A549 (cell line): ENCODE measurements at regions of chr5 and their contacts with region 1.

Region 1: GRCh38 chr5:132820162-132820754 is 7.2 kb downstream of the SOWAHA start:
- DNase-seq: peak; percentile 90
- ATAC-seq: peak; percentile 84 to 96
- H3K4me3 ChIP-seq: no peak overlapping the region
- H3K27ac ChIP-seq: peak overlapping the region in 1 of 2 experiments; percentile 49; a peak in 1 of 6 replicates
- H3K4me1 ChIP-seq: 0 out of 3 replicates have a peak, but pooled peaks cover 3% of the 10 kb centered on the region
- CTCF ChIP-seq: peak; percentile 93
- EP300 ChIP-seq: no peak
- POLR2A ChIP-seq: no peak
- RAD21 ChIP-seq: peak; percentile 84 to 87

Region 2: GRCh38 chr5:132714456-132715307 is 105.6 kb before region 1 on chr5:
- CTCF ChIA-PET with region 1: interaction called, 15 read pairs
- POLR2A ChIA-PET with region 1: no interaction called
- DNase-seq: peak in 1 of 2 experiments; percentile 7
- ATAC-seq: peak in 1 of 2 experiments; percentile 30; a peak in 1 of 6 replicates
- H3K4me3 ChIP-seq: no peak overlapping the region
- H3K27ac ChIP-seq: no peak overlapping the region
- H3K4me1 ChIP-seq: no peaks in the 10 kb centered on the region
- CTCF ChIP-seq: peak; percentile 59
- EP300 ChIP-seq: no peak
- POLR2A ChIP-seq: no peak
- RAD21 ChIP-seq: peak; percentile 31 to 44; a peak in 3 of 5 replicates

Region 3: DNA sequence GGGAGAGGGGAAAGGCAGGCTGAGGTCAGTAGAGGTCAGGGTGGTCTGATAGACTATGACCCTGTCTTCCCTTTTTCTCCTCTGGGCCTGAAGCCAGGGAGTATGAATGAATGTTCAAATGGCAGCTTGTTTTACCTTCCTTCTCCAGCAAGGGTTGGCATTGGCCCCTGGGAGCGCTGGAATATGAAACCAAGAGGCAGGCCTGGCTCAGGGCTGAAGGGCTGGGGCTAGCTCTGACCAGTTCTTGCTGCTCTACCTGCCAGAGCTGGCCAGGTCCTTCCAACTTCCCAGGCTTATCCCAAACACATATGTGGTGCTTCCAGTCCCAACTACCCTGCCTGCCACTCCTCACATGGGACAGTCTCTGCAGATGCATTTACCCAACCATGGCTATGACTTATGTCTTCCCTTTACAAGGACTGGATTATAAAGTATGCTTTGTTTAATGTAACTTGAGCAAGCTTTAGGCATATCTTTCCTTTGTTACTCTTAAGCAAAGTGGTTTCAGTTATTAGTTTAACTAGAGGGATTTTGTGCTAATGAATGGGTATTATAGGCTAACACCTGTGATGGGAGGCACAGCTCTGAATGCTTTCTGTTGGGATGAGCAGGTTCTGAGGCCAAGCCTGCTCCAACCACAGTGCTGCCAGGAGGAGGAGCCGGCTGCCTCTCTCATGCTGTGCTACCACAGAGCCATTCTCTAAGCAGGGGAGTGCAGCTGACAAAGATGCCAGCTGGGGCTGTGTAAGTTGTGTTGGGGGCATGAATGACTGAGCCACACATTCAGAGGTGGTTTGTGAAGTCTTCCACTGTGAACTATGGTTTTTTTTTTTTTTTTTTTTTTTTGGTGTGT is 66.9 kb before region 1 on chr5:
- CTCF ChIA-PET with region 1: interaction called, 64 read pairs
- POLR2A ChIA-PET with region 1: interaction called, 3 read pairs
- DNase-seq: peak in 1 of 2 experiments; percentile 18
- ATAC-seq: peak; percentile 64 to 80; a peak in 5 of 6 replicates
- H3K4me3 ChIP-seq: no peak overlapping the region
- H3K27ac ChIP-seq: no peak overlapping the region
- H3K4me1 ChIP-seq: no peaks in the 10 kb centered on the region
- CTCF ChIP-seq: no peak
- EP300 ChIP-seq: no peak
- POLR2A ChIP-seq: no peak
- RAD21 ChIP-seq: no peak

Region 4: GRCh38 chr5:132767150-132767549 is 53.1 kb before region 1 on chr5:
- CTCF ChIA-PET with region 1: interaction called, 23 read pairs
- POLR2A ChIA-PET with region 1: no interaction called
- DNase-seq: no peak
- ATAC-seq: no peak
- H3K4me3 ChIP-seq: no peak overlapping the region
- H3K27ac ChIP-seq: no peak overlapping the region
- H3K4me1 ChIP-seq: no peaks in the 10 kb centered on the region
- CTCF ChIP-seq: no peak
- EP300 ChIP-seq: no peak
- POLR2A ChIP-seq: no peak
- RAD21 ChIP-seq: no peak

Region 5: DNA sequence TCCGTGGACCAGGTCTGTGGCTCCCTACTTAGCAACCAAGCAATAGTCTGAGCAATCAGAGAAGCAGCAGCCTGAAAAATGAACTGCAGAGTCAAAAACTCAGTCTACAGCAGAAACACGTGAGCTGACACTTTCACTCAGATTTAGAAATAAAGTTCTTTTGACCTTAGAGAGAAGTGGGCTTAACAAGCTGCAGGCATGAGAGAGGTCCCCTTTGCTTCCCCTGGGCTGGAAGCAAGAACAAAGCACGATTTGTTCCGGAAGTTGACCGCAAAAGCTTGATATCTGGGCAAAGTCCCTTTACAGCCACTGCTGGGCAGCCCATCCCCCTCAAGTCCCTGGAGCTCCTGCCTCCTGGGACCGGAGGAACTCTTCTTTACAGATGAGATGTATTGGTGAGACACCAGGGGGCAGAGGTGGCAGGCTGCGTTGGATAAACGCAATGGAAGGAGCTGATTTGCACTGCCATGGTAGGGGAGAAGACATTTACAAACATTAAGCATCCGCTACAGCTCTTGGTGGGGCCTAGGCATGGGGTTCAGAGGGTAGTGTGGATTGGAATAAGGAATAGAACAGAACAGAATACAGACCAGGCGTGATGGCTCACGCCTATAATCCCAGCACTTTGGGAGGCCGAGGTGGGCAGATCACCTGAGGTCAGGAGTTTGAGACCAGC is 13.0 kb before region 1 on chr5:
- CTCF ChIA-PET with region 1: interaction called, 87 read pairs
- POLR2A ChIA-PET with region 1: no interaction called
- DNase-seq: peak; percentile 61 to 71
- ATAC-seq: peak; percentile 92 to 97
- H3K4me3 ChIP-seq: no peak overlapping the region
- H3K27ac ChIP-seq: peak overlapping the region; percentile 24 to 53; a peak in 4 of 6 replicates
- H3K4me1 ChIP-seq: peaks cover 5% of the 10 kb centered on the region; the same call in 1 of the 3 replicates
- CTCF ChIP-seq: peak; percentile 30; the same call in 2 of the 3 replicates
- EP300 ChIP-seq: no peak
- POLR2A ChIP-seq: no peak
- RAD21 ChIP-seq: no peak; a peak in 1 of 5 replicates

Region 6: GRCh38 chr5:132850066-132850465 is 29.8 kb after region 1 on chr5:
- CTCF ChIA-PET with region 1: interaction called, 13 read pairs
- POLR2A ChIA-PET with region 1: interaction called, 9 read pairs
- DNase-seq: no peak
- ATAC-seq: no peak
- H3K4me3 ChIP-seq: no peak overlapping the region
- H3K27ac ChIP-seq: no peak overlapping the region
- H3K4me1 ChIP-seq: no peaks in the 10 kb centered on the region
- CTCF ChIP-seq: no peak
- EP300 ChIP-seq: no peak
- POLR2A ChIP-seq: no peak
- RAD21 ChIP-seq: no peak